HCT116 (cell line): ENCODE measurements at regions of chr11 and their contacts with region 1.

Region 1: DNA sequence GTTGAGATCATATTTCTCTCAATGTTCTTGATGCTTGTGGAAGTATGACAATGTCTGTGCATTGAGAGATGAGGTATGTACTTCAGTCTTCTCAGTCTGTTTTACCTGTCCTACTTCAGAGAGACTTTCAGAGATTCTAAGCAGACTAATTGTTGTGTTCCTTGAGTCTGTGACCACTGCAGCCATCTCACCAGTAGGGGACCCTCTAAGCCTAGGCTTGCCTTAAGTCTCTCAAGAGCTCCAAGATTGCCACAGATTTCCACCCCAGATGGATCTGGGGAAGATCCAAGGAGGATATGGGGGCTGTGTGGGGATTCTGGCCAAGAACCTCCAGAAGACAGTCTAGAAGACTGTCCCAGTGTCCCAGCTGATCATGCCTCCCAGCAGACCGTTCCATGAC is 179.9 kb upstream of the PLET1 start:
- DNase-seq: peak; percentile 13
- ATAC-seq: peak; percentile 60; the same call in 1 of the 2 replicates
- H3K4me3 ChIP-seq: no peak overlapping the region
- H3K27ac ChIP-seq: no peak overlapping the region
- H3K4me1 ChIP-seq: no peaks in the 10 kb centered on the region
- H3K27me3 ChIP-seq: peaks cover 19% of the 10 kb centered on the region
- CTCF ChIP-seq: peak in 2 of 3 experiments; percentile 41 to 43; a peak in 3 of 6 replicates
- POLR2A ChIP-seq: no peak
- RAD21 ChIP-seq: peak; percentile 45

Region 2: DNA sequence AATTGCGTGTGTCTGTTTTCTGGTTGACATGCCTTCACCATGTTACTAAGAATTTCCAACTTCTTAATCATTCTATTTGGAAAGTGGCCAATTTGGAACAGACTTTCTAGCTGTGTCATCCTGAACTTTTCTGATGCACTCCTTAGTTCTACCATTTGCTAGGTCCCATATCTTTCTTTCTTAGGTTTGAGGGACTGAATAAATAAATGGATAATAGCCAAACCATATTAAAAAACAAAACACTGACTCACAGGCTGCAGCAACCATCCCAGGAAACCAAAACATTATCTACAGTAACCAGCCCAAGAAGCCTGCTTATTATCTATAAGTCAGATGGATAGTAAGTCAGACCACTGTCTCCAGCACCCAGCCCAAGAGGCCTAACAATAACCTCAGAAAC is 122.3 kb before region 1 on chr11:
- CTCF ChIA-PET with region 1: no interaction called
- POLR2A ChIA-PET with region 1: no interaction called
- RAD21 ChIA-PET with region 1: no interaction called
- intact Hi-C with region 1: no loop called
- DNase-seq: peak; percentile 4
- ATAC-seq: no peak
- H3K4me3 ChIP-seq: no peak overlapping the region
- H3K27ac ChIP-seq: no peak overlapping the region
- H3K4me1 ChIP-seq: peaks cover 25 to 37% of the 10 kb centered on the region in 2 experiments
- H3K27me3 ChIP-seq: no peaks in the 10 kb centered on the region
- CTCF ChIP-seq: no peak
- POLR2A ChIP-seq: no peak
- RAD21 ChIP-seq: no peak

Region 3: GRCh38 chr11:112453601-112454577 is 13.4 kb after region 1 on chr11:
- CTCF ChIA-PET with region 1: interaction called, 10 read pairs
- POLR2A ChIA-PET with region 1: no interaction called
- RAD21 ChIA-PET with region 1: no interaction called
- intact Hi-C with region 1: no loop called
- DNase-seq: peak; percentile 34
- ATAC-seq: peak; percentile 94
- H3K4me3 ChIP-seq: no peak overlapping the region
- H3K27ac ChIP-seq: no peak overlapping the region
- H3K4me1 ChIP-seq: no peaks in the 10 kb centered on the region
- H3K27me3 ChIP-seq: no peaks in the 10 kb centered on the region
- CTCF ChIP-seq: peak; percentile 46 to 80 (median 54); a peak in 5 of 6 replicates
- POLR2A ChIP-seq: no peak
- RAD21 ChIP-seq: peak; percentile 40